Endothelial cell of umbilical vein (primary cell): ENCODE measurements at regions of chr21 and their contacts with region 1.

Region 1: GRCh38 chr21:42107881-42108553 is 36.9 kb downstream of the UMODL1 start:
- DNase-seq: peak; percentile 58
- H3K4me3 ChIP-seq: no peak overlapping the region
- H3K27ac ChIP-seq: no peak overlapping the region
- H3K4me1 ChIP-seq: no peaks in the 10 kb centered on the region
- H3K27me3 ChIP-seq: peaks cover 5% of the 10 kb centered on the region in 2 experiments
- CTCF ChIP-seq: peak; percentile 77 to 98
- POLR2A ChIP-seq: no peak

Region 2: GRCh38 chr21:41816220-41817165 is 291.5 kb before region 1 on chr21:
- CTCF ChIA-PET with region 1: interaction called, 52 read pairs
- POLR2A ChIA-PET with region 1: no interaction called
- dilution Hi-C with region 1: no loop called
- intact Hi-C with region 1: loop called (anchors 1 kb)
- DNase-seq: peak; percentile 54
- H3K4me3 ChIP-seq: no peak overlapping the region
- H3K27ac ChIP-seq: no peak overlapping the region
- H3K4me1 ChIP-seq: no peaks in the 10 kb centered on the region
- H3K27me3 ChIP-seq: no peaks in the 10 kb centered on the region
- CTCF ChIP-seq: peak; percentile 82 to 90
- POLR2A ChIP-seq: no peak

Region 3: DNA sequence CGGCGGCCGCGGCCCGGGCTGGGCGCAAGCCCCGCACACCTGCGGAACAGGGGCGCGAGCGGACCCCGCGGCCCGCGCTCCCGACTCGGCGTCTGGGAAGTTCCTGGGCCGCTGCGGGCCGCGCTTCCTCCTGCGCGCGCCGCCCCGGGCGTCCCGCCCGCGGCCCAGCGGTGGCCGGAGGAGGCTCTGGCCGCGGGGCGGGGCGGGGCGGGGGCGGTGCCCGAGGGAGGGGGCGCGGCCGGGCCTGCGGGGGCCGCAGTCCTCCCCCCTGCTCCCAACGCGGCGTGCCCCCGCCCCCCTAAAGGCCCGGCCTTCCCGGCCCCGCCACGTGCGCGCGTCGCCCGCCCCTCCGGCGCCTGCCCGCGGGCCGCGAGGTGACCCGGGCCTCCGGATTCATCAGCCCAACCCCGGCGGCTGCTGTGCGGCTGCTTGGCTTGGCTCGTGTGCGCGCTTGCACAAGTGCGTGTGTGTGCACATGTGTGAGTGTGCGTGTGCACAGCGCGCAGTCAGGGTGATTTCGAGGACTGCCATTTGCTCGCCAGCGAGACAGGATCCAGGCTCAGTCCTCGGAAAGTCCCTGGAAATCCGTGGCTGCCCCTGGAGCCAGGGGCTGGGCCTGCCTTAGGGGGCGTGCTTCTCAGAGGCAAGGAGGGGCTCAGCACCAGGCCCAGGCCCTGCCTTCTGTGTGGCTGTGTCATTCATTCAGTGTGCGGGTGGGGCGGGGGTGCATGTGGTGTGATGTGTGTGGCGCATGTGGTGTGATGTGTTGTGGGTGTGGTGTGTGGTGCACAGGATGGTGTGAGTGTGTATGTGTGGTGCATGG is 154.0 kb before region 1 on chr21 and contains the start of gene C2CD2:
- CTCF ChIA-PET with region 1: interaction called, 17 read pairs
- POLR2A ChIA-PET with region 1: no interaction called
- dilution Hi-C with region 1: no loop called
- intact Hi-C with region 1: no loop called
- DNase-seq: peak; percentile 86
- H3K4me3 ChIP-seq: peak within 1 kb of the TSS; percentile 36 to 74 (median 72)
- H3K27ac ChIP-seq: peak within 1 kb of the TSS; percentile 64
- H3K4me1 ChIP-seq: peaks cover 36% of the 10 kb centered on the region
- H3K27me3 ChIP-seq: no peaks in the 10 kb centered on the region
- CTCF ChIP-seq: peak in 1 of 2 donors; percentile 20
- POLR2A ChIP-seq: peak; percentile 59
- total RNA-seq, gene C2CD2: 33.6 and 41.2 TPM in 2 replicates

Region 4: GRCh38 chr21:42056996-42057689 is 50.9 kb before region 1 on chr21:
- CTCF ChIA-PET with region 1: interaction called, 10 read pairs
- POLR2A ChIA-PET with region 1: no interaction called
- dilution Hi-C with region 1: no loop called
- intact Hi-C with region 1: no loop called
- DNase-seq: peak; percentile 61
- H3K4me3 ChIP-seq: peak overlapping the region in 1 of 3 experiments; percentile 10
- H3K27ac ChIP-seq: peak overlapping the region; percentile 46
- H3K4me1 ChIP-seq: peaks cover 23% of the 10 kb centered on the region
- H3K27me3 ChIP-seq: peaks cover 0 to 2% of the 10 kb centered on the region in 2 experiments
- CTCF ChIP-seq: no peak
- POLR2A ChIP-seq: no peak

Region 5: GRCh38 chr21:42089093-42089631 is 18.9 kb before region 1 on chr21:
- CTCF ChIA-PET with region 1: interaction called, 13 read pairs
- POLR2A ChIA-PET with region 1: no interaction called
- dilution Hi-C with region 1: no loop called
- intact Hi-C with region 1: no loop called
- DNase-seq: no peak
- H3K4me3 ChIP-seq: no peak overlapping the region
- H3K27ac ChIP-seq: no peak overlapping the region
- H3K4me1 ChIP-seq: no peaks in the 10 kb centered on the region
- H3K27me3 ChIP-seq: peaks cover 22 to 23% of the 10 kb centered on the region in 2 experiments
- CTCF ChIP-seq: no peak
- POLR2A ChIP-seq: no peak